Activated naive CD4-positive, alpha-beta T cell treated with anti-CD3 and anti-CD28 coated beads for 36 hours (primary cell): ENCODE measurements at regions of chr2 and their contacts with region 1.

Region 1: GRCh38 chr2:118046634-118047210 is 32.9 kb upstream of the CCDC93 start:
- DNase-seq: no peak
- H3K4me3 Mint-ChIP-seq: no peak overlapping the region
- H3K27ac Mint-ChIP-seq: no peak overlapping the region
- H3K4me1 Mint-ChIP-seq: peaks cover 2% of the 10 kb centered on the region
- H3K27me3 Mint-ChIP-seq: peaks cover 45% of the 10 kb centered on the region

Region 2: DNA sequence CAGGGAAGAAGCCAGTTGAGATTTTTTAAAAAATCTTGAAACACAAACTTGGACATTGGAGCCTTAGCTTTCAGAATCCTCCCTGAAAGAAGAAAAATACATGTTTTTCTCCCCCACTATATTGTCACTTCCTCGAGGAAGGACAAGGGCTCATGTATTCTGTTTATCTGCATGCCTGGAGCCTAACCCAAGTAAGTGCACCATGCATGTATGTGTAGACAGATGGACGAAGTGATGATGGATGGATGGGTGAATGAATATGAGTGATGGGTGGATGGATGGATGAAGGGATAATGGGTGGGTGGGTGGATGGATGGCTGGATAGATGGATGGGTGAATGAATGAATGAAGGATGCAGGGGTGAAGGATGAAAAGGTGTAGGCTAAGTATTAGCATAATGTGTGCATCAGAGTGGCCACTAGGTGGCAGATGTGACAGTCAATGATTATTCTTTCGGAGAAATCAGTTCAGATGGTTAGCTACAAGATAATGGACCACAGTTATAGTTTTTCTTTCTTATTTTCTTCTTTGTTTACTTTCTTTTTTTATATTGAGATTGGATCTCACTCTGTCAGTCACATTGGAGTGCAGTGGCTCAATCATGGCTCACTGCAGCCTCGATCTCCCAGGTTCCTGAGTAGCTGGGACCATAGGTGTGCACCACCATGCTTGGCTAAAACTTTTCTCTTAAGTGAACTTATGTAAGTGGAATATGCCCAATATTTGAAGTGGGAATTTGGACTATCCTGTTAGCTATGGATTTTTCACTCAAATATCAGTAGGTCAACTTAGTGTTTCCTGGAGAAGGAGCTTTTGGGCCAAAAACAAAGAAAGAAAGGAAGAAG is 14.3 kb before region 1 on chr2:
- CTCF ChIA-PET with region 1: interaction called, 14 read pairs
- intact Hi-C with region 1: no loop called
- DNase-seq: peak; percentile 69
- H3K4me3 Mint-ChIP-seq: no peak overlapping the region
- H3K27ac Mint-ChIP-seq: no peak overlapping the region
- H3K4me1 Mint-ChIP-seq: no peaks in the 10 kb centered on the region
- H3K27me3 Mint-ChIP-seq: peaks cover 42% of the 10 kb centered on the region

Region 3: DNA sequence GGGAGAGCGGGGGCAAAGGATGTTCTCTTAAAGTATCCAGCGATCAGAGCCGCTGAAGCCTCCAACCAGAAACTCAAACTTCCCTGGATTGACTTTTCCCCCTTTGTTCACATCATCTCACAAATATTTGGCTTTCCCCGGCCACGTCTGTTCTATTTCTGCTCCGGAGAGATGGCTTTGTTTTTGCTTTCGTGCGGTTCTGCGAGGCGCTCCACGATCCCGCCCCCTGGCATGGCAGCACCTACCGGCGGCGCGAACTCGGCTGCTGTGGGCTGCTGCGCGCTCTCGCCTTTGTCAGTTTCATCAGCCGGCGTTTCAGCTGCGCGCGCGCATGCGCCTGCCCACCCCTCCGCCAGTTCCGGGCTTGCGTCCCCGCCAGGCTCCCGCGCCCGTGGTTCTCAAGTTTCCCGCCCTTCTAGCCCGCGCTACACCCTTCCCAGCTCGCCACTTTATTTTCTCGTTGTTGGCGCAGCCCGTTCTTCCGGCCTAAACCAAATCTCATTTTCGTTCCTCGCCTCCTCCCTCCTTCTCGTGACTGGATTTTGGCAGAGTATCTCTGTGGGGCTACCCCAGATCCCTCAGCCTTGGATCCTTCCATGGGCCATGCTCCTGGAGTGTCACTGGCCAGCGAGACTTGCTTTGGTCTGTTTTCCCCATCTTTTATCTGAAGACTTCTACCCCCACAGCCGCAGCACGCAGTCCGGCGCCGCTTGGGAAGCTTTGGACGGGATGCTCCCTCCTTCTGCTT is 139.6 kb after region 1 on chr2:
- CTCF ChIA-PET with region 1: no interaction called
- intact Hi-C with region 1: loop called (anchors 1 kb)
- DNase-seq: peak; percentile 90
- H3K4me3 Mint-ChIP-seq: peak overlapping the region; percentile 92
- H3K27ac Mint-ChIP-seq: peak overlapping the region; percentile 97
- H3K4me1 Mint-ChIP-seq: peaks cover 14% of the 10 kb centered on the region
- H3K27me3 Mint-ChIP-seq: no peaks in the 10 kb centered on the region

Region 4: GRCh38 chr2:118309946-118310680 is 263.4 kb after region 1 on chr2:
- CTCF ChIA-PET with region 1: interaction called, 5 read pairs
- intact Hi-C with region 1: loop called (anchors 10 kb)
- DNase-seq: peak; percentile 69
- H3K4me3 Mint-ChIP-seq: peak overlapping the region; percentile 79
- H3K27ac Mint-ChIP-seq: peak overlapping the region; percentile 90
- H3K4me1 Mint-ChIP-seq: peaks cover 2% of the 10 kb centered on the region
- H3K27me3 Mint-ChIP-seq: no peaks in the 10 kb centered on the region

Region 5: GRCh38 chr2:118865106-118865505 is 818.4 kb after region 1 on chr2:
- CTCF ChIA-PET with region 1: no interaction called
- intact Hi-C with region 1: loop called (anchors 2 kb)
- DNase-seq: peak; percentile 32
- H3K4me3 Mint-ChIP-seq: no peak overlapping the region
- H3K27ac Mint-ChIP-seq: no peak overlapping the region
- H3K4me1 Mint-ChIP-seq: no peaks in the 10 kb centered on the region
- H3K27me3 Mint-ChIP-seq: peaks cover 40% of the 10 kb centered on the region